ENCODE measurements at regions of chr1 and their contacts with region 1.

Region 1: DNA sequence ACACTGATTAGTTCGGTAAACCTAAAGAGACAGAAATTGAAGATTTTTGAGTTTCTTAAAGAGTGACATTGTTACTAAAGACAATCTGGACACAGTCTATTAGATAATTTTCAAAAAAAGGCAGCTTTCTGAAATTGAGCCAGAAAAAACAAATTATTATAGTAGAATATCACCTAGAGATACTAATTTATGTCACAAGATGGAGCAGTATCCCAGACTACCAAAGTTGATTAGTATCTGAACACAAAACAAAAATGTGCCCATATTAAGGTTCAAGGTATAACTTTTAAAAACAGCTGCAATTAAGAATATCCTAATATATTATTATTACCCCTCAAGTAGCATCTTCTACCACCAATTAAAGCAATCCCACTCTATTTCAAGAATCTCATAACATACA is 40.5 kb upstream of the SYT2 start:
- DNase-seq: no peak
- ATAC-seq: no peak
- H3K4me3 ChIP-seq: no peak overlapping the region
- H3K27ac ChIP-seq: no peak overlapping the region
- H3K4me1 ChIP-seq: peaks cover 0 to 5% (median 0%) of the 10 kb centered on the region in 12 donors
- H3K27me3 ChIP-seq: no peaks in the 10 kb centered on the region
- CTCF ChIP-seq: peak in 7 of 12 donors; percentile 5 to 27 (median 20)
- POLR2A ChIP-seq: no peak

Region 2: GRCh38 chr1:202915146-202915545 is 164.4 kb after region 1 on chr1:
- intact Hi-C with region 1: loop called in 1 of 10 experiments (anchors 10 kb)
- DNase-seq: no peak
- ATAC-seq: no peak
- H3K4me3 ChIP-seq: no peak overlapping the region
- H3K27ac ChIP-seq: no peak overlapping the region
- H3K4me1 ChIP-seq: no peaks in the 10 kb centered on the region
- H3K27me3 ChIP-seq: no peaks in the 10 kb centered on the region
- CTCF ChIP-seq: no peak
- POLR2A ChIP-seq: no peak

Measured in heart left ventricle (tissue), 16 donors.